Sigmoid colon (tissue), 7 donors: ENCODE measurements at regions of chr1 and their contacts with region 1.

Region 1: GRCh38 chr1:22704440-22705067 is 6.1 kb upstream of the EPHB2 start:
- DNase-seq: peak; percentile 92
- H3K4me3 ChIP-seq: no peak overlapping the region
- H3K27ac ChIP-seq: no peak overlapping the region
- H3K4me1 ChIP-seq: peaks cover 0 to under 1% (median 0%) of the 10 kb centered on the region in 4 donors
- H3K27me3 ChIP-seq: peaks cover 0 to under 1% (median 0%) of the 10 kb centered on the region in 3 donors
- CTCF ChIP-seq: peak; percentile 67 to 96 (median 91)
- EP300 ChIP-seq: no peak
- POLR2A ChIP-seq: no peak

Region 2: GRCh38 chr1:22406742-22407472 is 297.6 kb before region 1 on chr1:
- intact Hi-C with region 1: no loop called
- DNase-seq: no peak
- H3K4me3 ChIP-seq: no peak overlapping the region
- H3K27ac ChIP-seq: no peak overlapping the region
- H3K4me1 ChIP-seq: no peaks in the 10 kb centered on the region
- H3K27me3 ChIP-seq: peaks cover 0 to 17% (median 0%) of the 10 kb centered on the region in 3 donors
- CTCF ChIP-seq: no peak
- EP300 ChIP-seq: no peak
- POLR2A ChIP-seq: no peak

Region 3: DNA sequence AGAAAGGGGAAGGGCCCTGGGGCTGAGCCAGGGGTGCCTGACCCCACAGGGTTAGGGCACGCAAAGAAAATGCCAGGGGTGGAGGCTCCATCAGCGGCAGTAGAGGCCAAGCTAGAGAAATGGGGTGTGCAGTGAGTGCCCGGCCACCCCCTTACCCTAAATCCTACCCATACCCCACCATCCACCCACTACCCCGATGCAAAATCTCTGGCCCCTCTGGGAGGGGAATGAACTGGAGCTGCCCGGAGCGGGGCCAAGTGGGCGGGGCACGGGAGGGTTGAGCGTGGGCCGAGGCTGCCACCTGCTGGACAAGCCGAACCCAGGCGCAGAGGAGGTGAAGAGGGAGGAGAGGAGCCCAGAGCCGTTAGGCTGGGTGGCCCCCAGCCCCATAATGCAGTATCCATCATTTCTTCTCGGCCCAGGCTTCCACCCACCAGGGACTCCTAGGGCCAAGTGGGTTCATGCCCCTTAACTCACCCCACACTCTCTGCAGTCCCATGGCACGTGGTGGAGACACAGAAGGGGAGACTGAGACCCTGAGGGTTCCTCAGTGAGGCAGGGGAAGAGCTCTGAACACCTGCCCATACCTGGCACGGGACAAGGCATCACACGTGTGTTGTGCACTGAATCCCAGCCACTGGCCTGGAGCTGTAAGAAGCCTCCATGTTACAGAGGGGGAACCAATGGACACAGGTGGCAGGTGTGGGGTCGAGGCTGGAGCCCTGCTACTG is 62.5 kb before region 1 on chr1:
- intact Hi-C with region 1: no loop called
- DNase-seq: peak; percentile 88
- H3K4me3 ChIP-seq: no peak overlapping the region
- H3K27ac ChIP-seq: no peak overlapping the region
- H3K4me1 ChIP-seq: peaks cover 0 to 8% (median 0%) of the 10 kb centered on the region in 4 donors
- H3K27me3 ChIP-seq: peaks cover 0 to 7% (median 0%) of the 10 kb centered on the region in 3 donors
- CTCF ChIP-seq: peak; percentile 73 to 91 (median 88)
- EP300 ChIP-seq: no peak
- POLR2A ChIP-seq: no peak

Region 4: DNA sequence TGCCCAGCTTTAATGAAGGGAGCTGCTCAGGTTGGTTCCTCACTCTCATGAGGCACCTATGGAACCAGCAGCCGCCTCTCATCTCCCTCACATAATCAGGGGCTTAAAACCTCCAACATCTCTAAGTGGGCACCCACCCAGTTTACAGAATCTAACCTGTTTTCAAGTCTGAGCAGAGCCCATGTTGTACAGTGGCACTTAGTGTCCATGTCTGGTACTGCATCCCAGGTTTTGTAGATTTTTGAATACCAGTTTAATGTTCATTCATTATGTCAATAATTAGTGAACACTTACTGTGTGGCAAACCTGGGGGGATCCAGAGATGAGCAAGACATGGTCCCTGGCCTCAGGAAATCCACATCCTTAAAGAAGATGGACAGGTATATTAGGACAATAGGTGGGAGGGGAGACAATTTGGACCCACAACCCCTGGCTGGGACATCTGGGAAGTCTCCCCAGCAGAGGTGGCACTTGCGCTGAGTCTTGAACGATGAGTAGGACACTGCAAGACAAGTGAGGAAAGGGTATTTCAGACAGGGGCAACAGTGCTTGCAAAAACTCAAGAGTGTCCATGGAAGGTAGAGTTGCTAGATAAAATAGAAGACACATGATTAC is 184.8 kb after region 1 on chr1:
- intact Hi-C with region 1: loop called (anchors 2 kb)
- DNase-seq: no peak
- H3K4me3 ChIP-seq: no peak overlapping the region
- H3K27ac ChIP-seq: no peak overlapping the region
- H3K4me1 ChIP-seq: no peaks in the 10 kb centered on the region
- H3K27me3 ChIP-seq: no peaks in the 10 kb centered on the region
- CTCF ChIP-seq: peak in 3 of 4 experiments; percentile 60 to 69 (median 65)
- EP300 ChIP-seq: no peak
- POLR2A ChIP-seq: no peak

Region 5: DNA sequence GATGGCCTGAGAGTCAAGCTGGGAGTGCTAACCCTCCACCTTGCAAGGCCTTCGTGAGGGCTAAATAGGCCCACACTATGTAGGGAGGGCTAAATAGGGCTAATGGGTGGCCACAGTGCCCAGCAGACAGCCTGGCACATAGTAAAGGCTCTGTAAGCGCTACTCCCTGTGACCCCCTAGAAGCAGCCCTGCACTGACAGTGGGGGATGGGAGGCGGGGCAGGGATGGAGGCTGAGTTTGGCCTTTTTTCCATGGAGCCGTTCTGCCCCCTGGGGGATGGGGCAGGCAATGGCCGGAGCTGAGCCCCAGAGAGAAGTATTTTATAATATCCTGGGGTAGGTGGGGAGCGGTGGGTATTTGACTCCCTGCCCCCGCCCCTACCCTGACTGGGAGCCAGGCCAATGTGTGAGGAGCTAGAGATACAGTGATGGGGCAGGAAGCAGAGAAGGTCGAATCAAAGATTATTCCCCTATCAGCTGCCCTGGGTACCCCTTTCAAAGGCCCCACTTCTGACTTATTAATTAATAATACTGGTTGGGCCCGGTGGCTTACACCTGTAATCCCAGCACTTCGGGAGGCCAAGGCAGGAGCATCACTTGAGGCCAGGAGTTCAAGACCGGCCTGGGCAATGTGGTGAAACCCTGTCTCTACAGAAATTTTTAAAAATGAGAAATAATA is 225.8 kb after region 1 on chr1:
- intact Hi-C with region 1: loop called (anchors 1 kb)
- DNase-seq: peak; percentile 63
- H3K4me3 ChIP-seq: no peak overlapping the region
- H3K27ac ChIP-seq: no peak overlapping the region
- H3K4me1 ChIP-seq: no peaks in the 10 kb centered on the region
- H3K27me3 ChIP-seq: peaks cover 0 to 5% (median 0%) of the 10 kb centered on the region in 3 donors
- CTCF ChIP-seq: peak in 3 of 4 experiments; percentile 59 to 60 (median 60)
- EP300 ChIP-seq: no peak
- POLR2A ChIP-seq: no peak

Region 6: GRCh38 chr1:22969304-22969709 is 264.8 kb after region 1 on chr1:
- intact Hi-C with region 1: loop called (anchors 10 kb)
- DNase-seq: peak; percentile 74
- H3K4me3 ChIP-seq: no peak overlapping the region
- H3K27ac ChIP-seq: peak overlapping the region in 3 of 4 donors; percentile 9 to 70 (median 56)
- H3K4me1 ChIP-seq: peaks cover 0 to 21% (median 10%) of the 10 kb centered on the region in 4 donors
- H3K27me3 ChIP-seq: no peaks in the 10 kb centered on the region
- CTCF ChIP-seq: no peak
- EP300 ChIP-seq: no peak
- POLR2A ChIP-seq: no peak